ENCODE measurements at regions of chr15 and their contacts with region 1.

Region 1: DNA sequence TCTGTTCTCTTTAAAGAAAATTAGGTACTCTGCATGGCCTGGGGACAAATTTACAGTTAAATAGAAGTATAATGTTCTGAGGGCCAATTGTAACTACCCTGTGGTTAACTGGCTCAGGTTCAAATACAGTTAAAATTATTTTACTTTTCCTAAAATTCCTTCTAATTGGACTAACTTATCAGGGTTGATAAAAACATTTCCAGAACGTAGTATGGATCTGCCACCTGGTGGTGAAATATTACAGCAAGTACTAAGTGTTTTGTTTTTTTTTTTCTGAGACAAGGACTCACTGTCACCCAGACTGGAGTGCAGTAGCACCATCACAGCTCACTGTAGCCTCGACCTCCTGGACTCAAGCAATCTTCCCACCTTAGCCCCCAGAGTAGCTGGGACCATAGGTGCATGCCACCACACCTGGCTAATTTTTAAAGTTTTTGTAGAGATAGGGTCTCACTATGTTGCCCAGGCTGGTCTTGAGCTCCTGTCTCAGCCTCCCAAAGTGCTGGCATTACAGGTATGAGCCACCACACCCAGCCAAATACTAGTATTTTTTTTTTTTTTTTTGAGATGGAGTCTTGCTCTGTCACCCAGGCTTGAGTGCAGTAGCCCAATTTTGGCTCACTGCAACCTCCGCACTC is 29.2 kb downstream of the NEO1 start:
- DNase-seq: peak; percentile 48
- H3K4me3 ChIP-seq: no peak overlapping the region
- H3K27ac ChIP-seq: no peak overlapping the region
- H3K4me1 ChIP-seq: no peaks in the 10 kb centered on the region
- H3K27me3 ChIP-seq: no peaks in the 10 kb centered on the region
- CTCF ChIP-seq: peak; percentile 60 to 69 (median 65)
- POLR2A ChIP-seq: no peak

Region 2: GRCh38 chr15:72473614-72474465 is 607.6 kb before region 1 on chr15 and contains the start of gene ARIH1:
- intact Hi-C with region 1: no loop called
- DNase-seq: peak; percentile 97
- H3K4me3 ChIP-seq: peak within 1 kb of the TSS; percentile 71 to 97
- H3K27ac ChIP-seq: peak within 1 kb of the TSS; percentile 97 to 100
- H3K4me1 ChIP-seq: peaks cover 26% of the 10 kb centered on the region
- H3K27me3 ChIP-seq: no peaks in the 10 kb centered on the region
- CTCF ChIP-seq: peak in 1 of 3 experiments; percentile 6
- POLR2A ChIP-seq: peak; percentile 99
- total RNA-seq, gene ARIH1: 97.8 to 113 TPM

Region 3: GRCh38 chr15:72783563-72784237 is 297.7 kb before region 1 on chr15 and contains the start of gene ADPGK:
- intact Hi-C with region 1: loop called (anchors 5 kb)
- DNase-seq: peak; percentile 89
- H3K4me3 ChIP-seq: peak within 1 kb of the TSS; percentile 97 to 99
- H3K27ac ChIP-seq: peak within 1 kb of the TSS; percentile 85 to 94
- H3K4me1 ChIP-seq: peaks cover 29% of the 10 kb centered on the region
- H3K27me3 ChIP-seq: no peaks in the 10 kb centered on the region
- CTCF ChIP-seq: peak in 2 of 3 experiments; percentile 4 to 43
- POLR2A ChIP-seq: peak; percentile 52
- total RNA-seq, gene ADPGK: 55.6 to 59.9 TPM

Region 4: DNA sequence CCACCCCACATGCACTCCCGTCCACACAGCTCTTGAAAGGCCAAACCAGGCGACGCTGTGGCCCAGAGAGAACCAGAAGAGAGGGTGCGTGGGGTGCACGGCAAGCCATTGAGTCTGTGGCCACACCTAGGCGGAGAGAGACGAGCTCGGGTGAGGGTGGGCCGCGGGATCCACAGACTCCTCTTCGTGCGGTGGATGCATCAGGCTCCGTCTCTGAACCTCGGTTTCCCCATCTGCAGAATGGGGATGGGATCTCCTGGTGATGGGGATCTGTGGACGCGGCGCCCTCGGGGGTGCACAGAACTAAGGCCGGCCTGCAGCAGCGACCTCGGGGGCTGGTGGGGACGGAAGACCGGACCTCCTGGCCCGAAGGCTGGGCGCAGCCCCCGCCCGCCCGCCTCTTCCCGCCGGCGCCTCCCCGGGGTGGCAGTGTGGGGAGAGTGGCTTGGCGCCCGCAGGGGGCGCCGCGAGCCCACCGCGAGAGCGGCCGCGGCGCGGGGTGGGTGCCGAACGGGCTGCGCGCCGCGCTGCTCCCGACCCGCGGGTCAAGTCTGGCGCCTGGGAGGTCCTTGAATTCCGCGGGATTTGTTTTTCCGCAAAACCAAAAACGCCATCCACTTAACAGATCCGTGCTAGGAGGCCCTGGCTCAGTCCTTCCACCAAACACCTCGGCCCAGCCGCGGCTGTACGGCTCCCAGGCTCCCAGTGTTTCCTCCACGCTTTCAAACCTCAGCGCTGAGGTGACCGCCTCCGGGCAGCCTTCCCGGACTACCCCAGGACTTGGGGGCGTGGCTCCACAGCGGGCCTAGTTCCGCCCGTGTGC is 284.7 kb before region 1 on chr15:
- intact Hi-C with region 1: loop called (anchors 5 kb)
- DNase-seq: peak; percentile 44
- H3K4me3 ChIP-seq: peak overlapping the region; percentile 49 to 57
- H3K27ac ChIP-seq: peak overlapping the region in 1 of 2 donors; percentile 68
- H3K4me1 ChIP-seq: peaks cover 9% of the 10 kb centered on the region
- H3K27me3 ChIP-seq: no peaks in the 10 kb centered on the region
- CTCF ChIP-seq: peak in 1 of 3 experiments; percentile 59
- POLR2A ChIP-seq: no peak

Region 5: GRCh38 chr15:73142802-73143762 is 61.6 kb after region 1 on chr15:
- intact Hi-C with region 1: no loop called
- DNase-seq: no peak
- H3K4me3 ChIP-seq: no peak overlapping the region
- H3K27ac ChIP-seq: no peak overlapping the region
- H3K4me1 ChIP-seq: no peaks in the 10 kb centered on the region
- H3K27me3 ChIP-seq: no peaks in the 10 kb centered on the region
- CTCF ChIP-seq: no peak
- POLR2A ChIP-seq: no peak

Measured in testis (tissue), 5 donors.